ENCODE measurements at regions of chrX and their contacts with region 1.

Region 1: GRCh38 chrX:110167952-110168451 is 149.9 kb downstream of the AMMECR1 start:
- DNase-seq: peak in 1 of 2 donors; percentile 29
- ATAC-seq: peak; percentile 40

Region 2: GRCh38 chrX:110327336-110327735 is 159.3 kb after region 1 on chrX:
- intact Hi-C with region 1: no loop called
- DNase-seq: no peak
- ATAC-seq: no peak

Region 3: GRCh38 chrX:110407910-110408545 is 240.0 kb after region 1 on chrX:
- intact Hi-C with region 1: loop called (anchors 5 to 10 kb)
- DNase-seq: peak in 1 of 2 donors; percentile 16
- ATAC-seq: peak; percentile 76